Heart left ventricle (tissue), 16 donors: ENCODE measurements at regions of chr9 and their contacts with region 1.

Region 1: DNA sequence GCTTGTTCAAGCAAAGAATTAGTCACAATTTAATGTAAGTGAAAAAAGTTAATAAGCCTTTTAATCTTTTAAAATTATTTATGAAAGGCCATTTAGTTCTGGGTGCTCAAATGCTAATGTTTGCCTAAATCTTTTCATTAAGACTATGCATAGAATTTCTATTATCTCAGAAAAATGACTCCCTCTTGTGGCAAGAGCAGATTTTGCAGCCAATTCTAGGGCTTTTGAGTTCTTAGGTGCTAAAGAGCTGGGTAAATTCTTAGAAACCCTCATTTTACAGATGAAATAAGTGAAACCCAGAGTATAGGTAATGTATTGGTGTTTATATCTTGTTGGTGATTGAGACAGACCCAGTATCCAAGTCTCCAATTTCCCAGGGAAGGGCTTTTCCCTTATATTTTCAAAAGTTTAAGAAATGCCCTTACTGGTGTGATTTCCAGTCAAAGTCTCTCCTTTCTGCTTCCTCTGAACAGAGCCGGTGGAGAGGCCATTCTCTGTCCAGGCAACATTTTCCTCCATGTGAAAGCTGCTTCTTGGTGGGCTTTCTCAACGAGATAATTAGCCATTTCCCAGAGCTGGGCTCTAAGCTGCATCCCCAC is 24.1 kb upstream of the PCSK5 start:
- DNase-seq: peak in 2 of 5 donors; percentile 23 to 44
- ATAC-seq: peak in 1 of 4 donors; percentile 36
- H3K4me3 ChIP-seq: no peak overlapping the region
- H3K27ac ChIP-seq: no peak overlapping the region
- H3K4me1 ChIP-seq: peaks cover 0 to 8% (median 0%) of the 10 kb centered on the region in 12 donors
- H3K27me3 ChIP-seq: no peaks in the 10 kb centered on the region
- CTCF ChIP-seq: peak; percentile 65 to 87 (median 82)
- POLR2A ChIP-seq: no peak

Region 2: GRCh38 chr9:75200892-75201470 is 665.4 kb before region 1 on chr9:
- intact Hi-C with region 1: loop called in 7 of 10 experiments (anchors 5 to 10 kb)
- DNase-seq: no peak
- ATAC-seq: no peak
- H3K4me3 ChIP-seq: no peak overlapping the region
- H3K27ac ChIP-seq: no peak overlapping the region
- H3K4me1 ChIP-seq: peaks cover 0 to 6% (median 0%) of the 10 kb centered on the region in 12 donors
- H3K27me3 ChIP-seq: no peaks in the 10 kb centered on the region
- CTCF ChIP-seq: peak; percentile 50 to 73 (median 66)
- POLR2A ChIP-seq: no peak

Region 3: GRCh38 chr9:75333624-75334023 is 532.7 kb before region 1 on chr9:
- intact Hi-C with region 1: loop called in 6 of 10 experiments (anchors 2 to 10 kb)
- DNase-seq: no peak
- ATAC-seq: no peak
- H3K4me3 ChIP-seq: no peak overlapping the region
- H3K27ac ChIP-seq: no peak overlapping the region
- H3K4me1 ChIP-seq: no peaks in the 10 kb centered on the region
- H3K27me3 ChIP-seq: no peaks in the 10 kb centered on the region
- CTCF ChIP-seq: peak in 11 of 12 donors; percentile 25 to 62 (median 46)
- POLR2A ChIP-seq: no peak

Region 4: GRCh38 chr9:75624998-75625397 is 241.4 kb before region 1 on chr9:
- intact Hi-C with region 1: loop called in 1 of 10 experiments (anchors 5 kb)
- DNase-seq: peak in 1 of 5 donors; percentile 30
- ATAC-seq: peak; percentile 37 to 48 (median 40)
- H3K4me3 ChIP-seq: no peak overlapping the region
- H3K27ac ChIP-seq: no peak overlapping the region
- H3K4me1 ChIP-seq: peaks cover 0 to 10% (median 0%) of the 10 kb centered on the region in 12 donors
- H3K27me3 ChIP-seq: no peaks in the 10 kb centered on the region
- CTCF ChIP-seq: no peak
- POLR2A ChIP-seq: no peak

Region 5: GRCh38 chr9:76302947-76303940 is 436.9 kb after region 1 on chr9:
- intact Hi-C with region 1: loop called in 6 of 10 experiments (anchors 5 to 10 kb)
- DNase-seq: no peak
- ATAC-seq: peak in 2 of 4 donors; percentile 50 to 53
- H3K4me3 ChIP-seq: no peak overlapping the region
- H3K27ac ChIP-seq: no peak overlapping the region
- H3K4me1 ChIP-seq: peaks cover 0 to 8% (median 0%) of the 10 kb centered on the region in 12 donors
- H3K27me3 ChIP-seq: peaks cover 0 to 6% (median 0%) of the 10 kb centered on the region in 9 donors
- CTCF ChIP-seq: peak; percentile 57 to 80 (median 72)
- POLR2A ChIP-seq: no peak